Right ventricle myocardium inferior (tissue), 1 donor: ENCODE measurements at regions of chr11 and their contacts with region 1.

Region 1: DNA sequence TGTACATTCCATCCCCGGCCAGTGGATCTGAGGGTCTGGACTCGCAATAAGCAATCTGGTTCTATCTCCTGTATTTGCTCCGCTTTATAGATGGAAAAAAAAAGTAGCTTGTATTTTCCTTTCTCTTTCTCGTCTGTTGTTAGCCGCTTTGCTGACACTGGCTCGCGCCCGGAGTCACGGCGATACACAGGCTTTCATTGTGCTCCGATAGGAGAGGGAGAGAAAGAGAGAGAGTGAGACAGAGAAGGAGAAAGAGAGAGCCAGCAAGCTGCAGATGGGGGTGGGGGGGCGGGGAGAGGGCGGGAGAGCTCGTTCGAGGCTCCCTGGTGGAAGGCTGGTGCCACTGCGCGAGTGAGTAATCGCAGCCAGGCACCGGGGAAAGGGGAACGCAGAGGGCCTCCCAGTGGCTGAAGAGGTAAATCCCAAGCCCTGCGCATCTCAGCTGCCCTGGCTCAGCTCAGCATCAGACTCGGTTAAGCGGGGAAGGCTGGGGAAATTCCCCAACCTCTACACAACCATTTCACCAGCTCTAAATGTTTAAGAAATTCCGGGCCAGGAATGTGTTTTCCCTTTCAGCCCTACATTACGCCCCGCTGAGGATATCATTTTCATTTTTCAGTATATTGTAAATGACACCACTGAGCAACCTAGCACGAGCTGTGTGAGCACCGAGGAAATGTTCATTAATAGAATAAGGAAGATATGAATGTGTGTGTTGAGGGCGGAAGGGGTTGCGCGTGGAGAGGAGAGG is at the start of gene MAML2:
- DNase-seq: peak; percentile 96
- ATAC-seq: peak; percentile 94
- total RNA-seq, gene MAML2: 5.2 TPM

Region 2: GRCh38 chr11:95923728-95924413 is 419.3 kb before region 1 on chr11 and contains the start of gene MTMR2:
- intact Hi-C with region 1: loop called (anchors 5 kb)
- DNase-seq: peak; percentile 91
- ATAC-seq: peak; percentile 100
- total RNA-seq, gene MTMR2: 14.7 TPM

Region 3: DNA sequence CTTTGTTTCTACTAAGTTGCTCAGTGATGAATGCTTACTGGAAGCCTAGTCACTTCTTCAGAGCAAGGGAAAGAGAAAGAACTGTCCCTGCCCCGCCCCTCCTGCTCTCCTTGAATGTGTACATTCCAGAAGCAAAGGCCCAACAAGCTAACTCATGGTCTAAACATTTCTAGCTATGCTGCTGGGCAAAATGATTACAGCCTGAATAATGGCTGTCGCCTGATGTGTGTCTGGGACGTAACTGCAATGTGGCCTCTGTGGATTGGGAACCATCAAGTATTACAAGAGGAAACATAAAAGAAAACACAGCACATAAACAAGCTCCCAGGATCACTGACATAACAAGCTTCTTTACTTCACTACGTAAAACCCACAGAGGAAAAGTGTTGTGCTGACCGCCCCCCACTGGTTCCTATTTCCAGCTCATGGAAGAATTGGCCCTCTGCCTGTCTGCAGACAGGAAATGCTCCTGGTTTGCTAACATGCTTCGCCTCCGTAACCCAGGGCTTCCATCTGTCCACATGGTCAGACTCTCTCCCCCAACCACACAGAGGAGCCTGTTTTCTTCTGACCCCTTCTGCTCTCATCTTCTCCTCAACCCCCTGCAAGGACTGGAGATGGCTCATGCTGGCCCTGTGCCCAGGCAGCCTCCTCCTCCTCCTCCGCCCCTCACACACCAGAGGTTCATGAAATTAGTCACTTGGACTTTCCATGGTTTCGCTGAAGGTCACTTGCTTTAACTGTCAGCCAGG is 187.3 kb before region 1 on chr11:
- intact Hi-C with region 1: loop called (anchors 1 kb)
- DNase-seq: peak; percentile 74
- ATAC-seq: peak; percentile 79

Region 4: DNA sequence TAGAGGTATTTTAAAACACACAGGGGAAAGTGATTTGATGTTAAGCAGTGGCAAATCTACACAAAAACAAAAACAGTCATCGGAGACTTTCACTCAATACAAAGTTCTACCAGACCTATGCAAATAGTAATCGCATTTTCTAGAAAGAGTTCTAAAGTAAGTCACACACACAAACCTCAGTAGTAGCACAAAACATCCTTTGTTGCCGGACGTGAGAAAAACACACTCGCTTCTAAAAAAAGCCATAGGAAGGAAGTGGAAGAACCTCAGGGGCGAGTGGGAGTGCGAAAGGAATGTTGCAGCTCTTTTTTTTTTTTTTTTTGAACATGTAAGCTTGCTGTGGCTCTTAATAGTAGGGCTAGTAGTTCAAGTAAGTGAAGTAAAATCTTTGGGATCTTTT is 89.0 kb before region 1 on chr11:
- intact Hi-C with region 1: loop called (anchors 2 kb)
- DNase-seq: no peak
- ATAC-seq: no peak

Region 5: GRCh38 chr11:96361778-96362177 is 18.6 kb after region 1 on chr11:
- intact Hi-C with region 1: no loop called
- DNase-seq: no peak
- ATAC-seq: no peak